Activated naive CD8-positive, alpha-beta T cell treated with anti-CD3 and anti-CD28 coated beads, Interleukin-2, amount 10 ng/mL, durations not matched to agents 7 days and 5 days (primary cell): ENCODE measurements at regions of chr7 and their contacts with region 1.

Region 1: GRCh38 chr7:76317782-76318487 is 15.5 kb downstream of the HSPB1 start:
- DNase-seq: peak; percentile 96
- ATAC-seq: peak; percentile 96
- H3K4me3 Mint-ChIP-seq: peak overlapping the region; percentile 98
- H3K27ac Mint-ChIP-seq: peak overlapping the region; percentile 100
- H3K4me1 Mint-ChIP-seq: peaks cover 22% of the 10 kb centered on the region
- H3K27me3 Mint-ChIP-seq: no peaks in the 10 kb centered on the region

Region 2: DNA sequence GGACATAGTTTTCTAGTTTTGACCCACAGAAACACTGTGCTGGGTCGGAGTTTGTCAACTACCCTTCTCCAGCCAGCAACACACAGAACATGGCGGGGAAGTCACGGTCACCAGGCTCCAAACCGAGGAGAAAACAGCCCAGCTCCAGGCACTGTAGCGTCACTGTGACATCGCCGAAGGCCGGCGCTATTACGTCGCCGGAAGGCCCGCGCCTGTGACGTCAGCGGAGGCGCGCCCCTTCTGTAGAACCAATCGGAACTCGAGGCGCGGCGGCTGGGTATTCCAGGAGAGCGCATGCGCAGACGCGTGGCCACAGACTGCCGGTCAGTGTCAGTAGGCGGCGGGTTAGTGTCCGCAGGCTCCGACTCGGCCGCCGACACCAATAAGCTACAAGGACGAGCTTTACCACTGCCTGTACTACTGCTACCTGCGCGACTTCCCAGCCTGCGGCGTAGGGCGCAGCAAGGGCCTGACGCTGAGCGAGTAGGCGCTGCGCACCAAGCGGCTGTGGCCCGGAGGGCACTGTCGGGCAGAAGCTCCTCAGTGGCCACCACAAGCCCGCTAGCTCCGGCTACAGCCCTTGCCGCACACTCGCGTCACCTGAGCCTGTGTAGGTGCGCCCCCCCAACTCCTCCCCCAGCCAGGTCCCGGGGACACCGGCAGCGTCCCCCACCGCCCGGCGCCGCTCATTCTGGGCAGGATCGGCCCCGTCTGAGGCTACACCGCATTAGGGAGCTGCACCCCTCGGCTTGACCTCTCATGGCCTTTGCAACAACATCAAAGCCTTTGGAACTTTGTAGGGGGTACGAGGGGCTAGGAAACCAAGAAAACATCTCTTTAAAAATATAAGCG is 151.3 kb before region 1 on chr7:
- POLR2A ChIA-PET with region 1: interaction called, 16 read pairs
- DNase-seq: peak; percentile 97
- ATAC-seq: peak; percentile 95
- H3K4me3 Mint-ChIP-seq: peak overlapping the region; percentile 85
- H3K27ac Mint-ChIP-seq: peak overlapping the region; percentile 91
- H3K4me1 Mint-ChIP-seq: peaks cover 7% of the 10 kb centered on the region
- H3K27me3 Mint-ChIP-seq: no peaks in the 10 kb centered on the region

Region 3: DNA sequence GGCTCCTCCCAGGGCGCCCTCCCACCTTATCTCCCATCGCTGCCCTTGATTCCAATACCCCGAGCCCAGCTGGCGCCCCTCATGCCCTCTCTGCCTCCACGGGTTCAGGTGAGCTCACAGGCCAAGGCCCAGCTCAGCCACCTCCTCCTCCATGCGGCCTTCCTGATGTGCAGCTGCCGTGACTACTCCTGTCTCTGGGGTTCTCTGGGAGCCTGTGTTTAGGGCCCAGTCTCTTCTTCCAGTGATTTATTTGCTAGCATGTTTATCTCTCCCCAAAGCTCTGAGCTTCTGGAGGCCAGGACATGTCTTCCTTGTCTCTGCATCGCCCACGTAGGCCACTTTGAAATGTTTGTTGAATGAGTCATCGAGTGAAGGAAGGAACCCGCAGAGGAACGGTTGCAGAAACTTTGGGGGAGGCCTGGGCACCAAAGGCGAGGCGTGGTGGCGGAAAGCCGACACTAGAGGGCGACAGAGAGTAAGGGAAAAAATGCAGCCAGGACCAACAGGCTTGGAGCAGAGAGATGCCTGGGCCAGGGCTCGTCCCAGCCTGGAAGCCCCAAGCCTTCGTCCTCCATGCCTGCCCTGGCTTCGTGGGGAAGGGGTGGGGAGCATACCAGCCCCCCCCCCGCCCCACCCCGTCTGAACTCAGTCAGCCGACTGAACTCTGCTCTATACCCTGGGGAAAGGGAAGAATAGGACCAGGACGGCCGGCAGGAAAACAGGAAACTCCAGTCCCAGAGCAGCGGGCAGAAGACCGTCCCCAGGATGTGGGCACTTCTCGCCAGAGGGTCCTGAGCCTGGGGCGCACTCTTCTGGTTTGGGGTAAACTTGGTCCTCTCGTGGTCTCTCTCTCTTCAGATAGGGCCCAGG is 26.4 kb before region 1 on chr7:
- POLR2A ChIA-PET with region 1: interaction called, 24 read pairs
- DNase-seq: peak; percentile 89
- ATAC-seq: peak; percentile 90
- H3K4me3 Mint-ChIP-seq: peak overlapping the region; percentile 35
- H3K27ac Mint-ChIP-seq: peak overlapping the region; percentile 86
- H3K4me1 Mint-ChIP-seq: peaks cover 8% of the 10 kb centered on the region
- H3K27me3 Mint-ChIP-seq: peaks cover 8% of the 10 kb centered on the region

Region 4: DNA sequence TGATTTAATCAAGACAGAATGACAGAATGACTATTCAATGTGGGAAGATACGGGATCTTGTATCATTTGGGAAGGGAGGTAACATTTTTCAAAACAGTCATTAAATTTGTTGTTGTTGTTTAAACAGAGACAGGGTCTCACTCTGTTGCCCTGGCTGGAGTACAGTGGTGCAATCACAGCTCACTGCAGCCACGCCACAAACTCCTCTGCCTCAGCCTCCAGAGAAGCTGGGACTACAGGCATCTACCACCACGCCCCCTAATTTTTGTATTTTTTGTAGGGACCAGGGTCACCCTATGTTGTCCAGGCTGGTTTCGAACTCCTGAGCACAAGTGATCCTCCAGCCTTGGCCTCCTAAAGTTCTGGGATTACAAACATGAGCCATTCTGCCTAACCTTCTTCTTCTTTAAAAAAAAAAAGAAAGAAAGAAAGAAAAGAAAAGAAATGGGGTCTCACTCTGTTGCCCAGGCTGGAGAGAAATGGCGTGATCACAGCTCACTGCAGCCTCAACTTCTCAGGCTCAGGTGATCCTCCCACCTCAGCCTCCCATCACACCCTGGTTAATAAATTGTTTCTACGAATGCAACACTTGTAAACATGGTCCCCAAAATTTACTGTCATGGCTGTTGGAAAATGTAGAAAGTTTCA is 16.5 kb after region 1 on chr7:
- POLR2A ChIA-PET with region 1: no interaction called
- DNase-seq: no peak
- ATAC-seq: no peak
- H3K4me3 Mint-ChIP-seq: no peak overlapping the region
- H3K27ac Mint-ChIP-seq: no peak overlapping the region
- H3K4me1 Mint-ChIP-seq: peaks cover 13% of the 10 kb centered on the region
- H3K27me3 Mint-ChIP-seq: no peaks in the 10 kb centered on the region

Region 5: DNA sequence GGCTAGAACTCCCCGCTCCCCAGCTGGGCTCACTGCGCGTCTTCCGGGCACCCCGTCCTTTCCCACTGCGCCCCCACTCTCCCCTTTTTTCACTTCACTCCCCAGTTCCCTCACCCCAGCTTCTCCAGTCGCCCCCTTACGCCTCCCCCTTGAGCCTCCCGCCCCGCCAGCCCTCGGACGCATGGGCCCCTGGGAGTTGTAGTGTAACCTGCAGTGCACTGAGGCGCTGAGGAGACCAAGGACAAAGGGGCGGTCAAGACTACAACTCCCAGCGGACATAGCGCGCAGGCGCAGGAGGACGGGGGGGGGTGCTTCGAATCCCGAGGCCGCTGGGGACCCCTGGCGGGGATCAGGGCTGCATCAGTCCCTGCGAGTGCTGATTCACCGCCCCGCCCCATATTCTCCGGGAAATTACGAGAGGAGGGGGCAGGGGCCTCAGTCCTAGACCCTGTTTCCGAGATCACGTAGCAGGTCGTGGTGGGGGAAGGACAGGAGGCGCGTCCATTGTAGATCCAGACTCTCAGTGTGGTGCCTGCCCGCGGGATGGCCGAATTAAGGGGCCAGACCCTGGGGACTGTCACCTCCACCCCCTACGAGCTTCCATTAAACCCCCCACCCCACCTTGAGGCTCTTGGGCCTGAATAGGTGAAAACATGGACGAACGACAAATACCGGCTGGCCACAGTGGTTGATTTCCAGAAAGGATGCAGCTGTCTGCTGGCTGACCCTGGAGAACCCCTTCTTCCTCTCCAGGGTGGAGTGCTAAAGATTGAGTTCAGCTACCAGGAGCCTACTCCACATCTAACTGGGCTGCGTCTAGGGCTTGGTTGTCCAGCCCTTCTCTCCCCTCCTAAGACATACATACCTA is 41.4 kb after region 1 on chr7:
- POLR2A ChIA-PET with region 1: interaction called, 54 read pairs
- DNase-seq: peak; percentile 92
- ATAC-seq: peak; percentile 95
- H3K4me3 Mint-ChIP-seq: peak overlapping the region; percentile 92
- H3K27ac Mint-ChIP-seq: peak overlapping the region; percentile 99
- H3K4me1 Mint-ChIP-seq: peaks cover 37% of the 10 kb centered on the region
- H3K27me3 Mint-ChIP-seq: peaks cover 4% of the 10 kb centered on the region